Body of pancreas (tissue), 4 donors: ENCODE measurements at regions of chr18 and their contacts with region 1.

Region 1: DNA sequence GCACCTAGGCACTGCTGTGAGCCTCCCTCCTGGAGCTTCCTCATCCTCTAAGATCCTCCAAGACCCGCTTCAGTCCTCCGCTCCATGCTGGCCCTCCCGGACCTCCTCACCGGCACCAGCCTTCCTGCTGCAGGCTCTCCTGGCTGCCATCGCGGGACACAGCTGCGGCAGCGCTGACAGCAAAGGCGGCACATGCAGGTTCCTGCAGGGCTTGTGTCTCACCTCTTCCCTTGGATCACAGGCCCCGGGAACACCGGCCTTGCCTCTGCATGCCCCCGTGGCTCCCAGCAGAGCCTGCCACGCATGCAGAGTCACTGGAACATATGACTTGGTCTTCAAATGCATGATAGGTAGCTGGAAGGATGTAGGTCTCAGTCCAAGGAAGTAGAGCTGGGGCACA is 67.2 kb downstream of the PTGR3 start:
- DNase-seq: no peak
- ATAC-seq: no peak
- H3K4me3 ChIP-seq: no peak overlapping the region
- H3K27ac ChIP-seq: no peak overlapping the region
- H3K4me1 ChIP-seq: no peaks in the 10 kb centered on the region
- H3K27me3 ChIP-seq: no peaks in the 10 kb centered on the region
- CTCF ChIP-seq: no peak
- POLR2A ChIP-seq: no peak

Region 2: GRCh38 chr18:74942319-74942910 is 199.3 kb before region 1 on chr18:
- intact Hi-C with region 1: no loop called
- DNase-seq: no peak
- ATAC-seq: no peak
- H3K4me3 ChIP-seq: no peak overlapping the region
- H3K27ac ChIP-seq: no peak overlapping the region
- H3K4me1 ChIP-seq: no peaks in the 10 kb centered on the region
- H3K27me3 ChIP-seq: no peaks in the 10 kb centered on the region
- CTCF ChIP-seq: no peak
- POLR2A ChIP-seq: no peak

Region 3: GRCh38 chr18:75089748-75090327 is 51.9 kb before region 1 on chr18:
- intact Hi-C with region 1: loop called (anchors 5 kb)
- DNase-seq: no peak
- ATAC-seq: no peak
- H3K4me3 ChIP-seq: no peak overlapping the region
- H3K27ac ChIP-seq: no peak overlapping the region
- H3K4me1 ChIP-seq: no peaks in the 10 kb centered on the region
- H3K27me3 ChIP-seq: no peaks in the 10 kb centered on the region
- CTCF ChIP-seq: no peak
- POLR2A ChIP-seq: no peak

Region 4: DNA sequence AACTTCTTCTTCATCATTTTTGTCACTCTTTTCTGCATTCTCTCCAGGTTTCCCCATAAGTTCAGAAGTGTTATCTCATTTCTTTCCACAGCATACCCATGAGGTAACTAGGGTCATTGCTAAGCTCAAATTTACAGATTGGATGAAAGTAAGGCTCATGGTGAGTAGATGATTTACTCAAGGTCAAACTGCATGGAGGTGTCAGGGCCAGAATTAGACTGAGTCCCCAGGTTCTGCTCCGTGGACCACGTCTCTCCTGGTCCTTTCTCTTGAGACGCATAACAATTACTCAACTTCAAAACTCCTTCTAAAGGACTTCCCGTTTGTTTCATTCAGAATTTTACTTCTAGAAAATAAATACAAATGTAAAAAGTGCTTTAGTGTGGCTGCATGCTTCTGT is 242.4 kb after region 1 on chr18:
- intact Hi-C with region 1: no loop called
- DNase-seq: no peak
- ATAC-seq: no peak
- H3K4me3 ChIP-seq: no peak overlapping the region
- H3K27ac ChIP-seq: no peak overlapping the region
- H3K4me1 ChIP-seq: no peaks in the 10 kb centered on the region
- H3K27me3 ChIP-seq: no peaks in the 10 kb centered on the region
- CTCF ChIP-seq: no peak
- POLR2A ChIP-seq: no peak